ENCODE measurements at regions of chr20 and their contacts with region 1.

Region 1: DNA sequence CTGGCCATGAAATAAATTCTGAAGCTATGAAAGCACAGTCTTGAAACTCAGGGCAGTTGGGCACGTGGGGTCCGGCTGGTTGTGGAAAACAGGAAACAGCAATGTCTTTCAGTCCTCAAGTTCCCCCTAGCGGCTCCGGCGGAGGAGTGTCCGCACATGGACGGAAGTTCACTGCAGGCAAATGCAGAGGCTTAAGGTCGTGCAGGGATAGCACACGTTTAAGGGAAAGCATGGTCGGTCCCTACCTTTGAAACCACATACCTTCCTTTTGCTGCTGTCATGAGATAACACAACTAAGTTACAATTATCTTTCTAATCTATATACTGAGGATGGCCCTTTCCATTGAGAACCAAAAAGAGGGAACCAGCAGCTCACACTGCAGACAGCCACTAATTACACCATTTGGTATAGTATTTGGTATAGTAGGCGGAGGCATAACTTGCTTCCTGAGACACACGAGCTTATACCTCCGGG is 52.6 kb upstream of the NFATC2 start:
- DNase-seq: peak; percentile 86
- H3K4me3 Mint-ChIP-seq: no peak overlapping the region
- H3K27ac Mint-ChIP-seq: peak overlapping the region; percentile 61
- H3K4me1 Mint-ChIP-seq: peaks cover 6% of the 10 kb centered on the region
- H3K27me3 Mint-ChIP-seq: no peaks in the 10 kb centered on the region
- CTCF ChIP-seq: peak; percentile 92

Region 2: GRCh38 chr20:51346686-51347508 is 248.2 kb before region 1 on chr20:
- CTCF ChIA-PET with region 1: interaction called, 16 read pairs
- POLR2A ChIA-PET with region 1: no interaction called
- intact Hi-C with region 1: no loop called
- DNase-seq: peak; percentile 78
- H3K4me3 Mint-ChIP-seq: no peak overlapping the region
- H3K27ac Mint-ChIP-seq: no peak overlapping the region
- H3K4me1 Mint-ChIP-seq: peaks cover 13% of the 10 kb centered on the region
- H3K27me3 Mint-ChIP-seq: no peaks in the 10 kb centered on the region
- CTCF ChIP-seq: no peak

Region 3: GRCh38 chr20:51372176-51372803 is 222.8 kb before region 1 on chr20:
- CTCF ChIA-PET with region 1: interaction called, 128 read pairs
- POLR2A ChIA-PET with region 1: interaction called, 5 read pairs
- intact Hi-C with region 1: loop called (anchors 1 kb)
- DNase-seq: peak; percentile 75
- H3K4me3 Mint-ChIP-seq: no peak overlapping the region
- H3K27ac Mint-ChIP-seq: no peak overlapping the region
- H3K4me1 Mint-ChIP-seq: no peaks in the 10 kb centered on the region
- H3K27me3 Mint-ChIP-seq: no peaks in the 10 kb centered on the region
- CTCF ChIP-seq: peak; percentile 90

Region 4: DNA sequence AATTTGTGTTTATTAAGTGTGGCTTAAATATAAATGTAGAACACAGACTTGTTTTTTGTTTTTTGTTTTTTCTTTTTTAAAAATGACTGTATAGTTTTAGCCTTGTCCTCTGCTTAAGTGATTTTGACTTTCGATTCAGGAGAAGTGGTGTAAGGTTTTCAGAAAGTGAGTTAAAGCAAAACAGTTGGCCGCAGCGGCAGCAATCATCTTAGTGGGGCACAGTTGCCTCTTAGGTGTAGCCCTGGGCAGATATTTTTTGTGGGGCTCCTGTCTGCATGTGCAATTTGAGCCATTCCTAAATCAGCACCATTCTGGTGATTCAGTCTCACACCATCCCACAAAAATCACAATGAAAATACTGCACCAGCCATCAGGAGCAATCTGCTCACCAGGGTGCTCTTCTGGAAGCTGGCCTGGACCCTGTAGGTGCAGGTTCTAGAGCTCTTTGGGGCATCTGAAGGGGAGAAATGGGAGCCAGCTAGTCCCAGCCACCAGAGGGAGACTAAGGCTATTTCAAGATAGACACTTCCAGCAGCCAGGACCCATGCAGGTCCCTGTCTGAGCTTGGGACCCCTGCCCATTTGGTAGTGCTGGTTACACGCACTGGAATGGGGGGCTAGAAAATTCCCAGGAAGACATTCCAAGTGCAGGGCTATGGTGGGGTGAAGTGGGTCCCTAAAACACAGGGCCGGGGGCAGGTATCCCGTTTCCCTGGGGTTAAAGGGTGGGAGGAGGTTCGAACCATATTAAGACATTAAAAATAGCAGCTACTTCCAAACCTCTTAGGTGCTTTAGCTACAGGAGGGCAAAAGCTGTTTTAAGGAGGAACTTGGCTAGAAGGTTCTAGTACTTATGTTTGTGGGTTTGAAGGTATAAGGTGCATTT is 209.2 kb before region 1 on chr20:
- CTCF ChIA-PET with region 1: interaction called, 178 read pairs
- POLR2A ChIA-PET with region 1: interaction called, 16 read pairs
- intact Hi-C with region 1: loop called (anchors 1 kb)
- DNase-seq: peak; percentile 52
- H3K4me3 Mint-ChIP-seq: no peak overlapping the region
- H3K27ac Mint-ChIP-seq: no peak overlapping the region
- H3K4me1 Mint-ChIP-seq: no peaks in the 10 kb centered on the region
- H3K27me3 Mint-ChIP-seq: no peaks in the 10 kb centered on the region
- CTCF ChIP-seq: peak; percentile 51

Region 5: GRCh38 chr20:51569827-51570738 is 25.0 kb before region 1 on chr20:
- CTCF ChIA-PET with region 1: interaction called, 57 read pairs
- POLR2A ChIA-PET with region 1: no interaction called
- intact Hi-C with region 1: no loop called
- DNase-seq: peak; percentile 58
- H3K4me3 Mint-ChIP-seq: no peak overlapping the region
- H3K27ac Mint-ChIP-seq: no peak overlapping the region
- H3K4me1 Mint-ChIP-seq: peaks cover 20% of the 10 kb centered on the region
- H3K27me3 Mint-ChIP-seq: peaks cover 14% of the 10 kb centered on the region
- CTCF ChIP-seq: no peak

Region 6: GRCh38 chr20:51624157-51624731 is 29.1 kb after region 1 on chr20:
- CTCF ChIA-PET with region 1: interaction called, 12 read pairs
- POLR2A ChIA-PET with region 1: no interaction called
- intact Hi-C with region 1: no loop called
- DNase-seq: peak; percentile 79
- H3K4me3 Mint-ChIP-seq: no peak overlapping the region
- H3K27ac Mint-ChIP-seq: no peak overlapping the region
- H3K4me1 Mint-ChIP-seq: no peaks in the 10 kb centered on the region
- H3K27me3 Mint-ChIP-seq: no peaks in the 10 kb centered on the region
- CTCF ChIP-seq: peak; percentile 58

Measured in MCF 10A (cell line).